ENCODE measurements at regions of chr18 and their contacts with region 1.

Region 1: GRCh38 chr18:80108728-80109675 is at the start of gene ADNP2:
- DNase-seq: peak; percentile 81 to 96
- H3K4me3 ChIP-seq: peak within 1 kb of the TSS; percentile 76 to 85
- H3K27ac ChIP-seq: peak within 1 kb of the TSS; percentile 99
- H3K4me1 ChIP-seq: peaks cover 0 to 11% of the 10 kb centered on the region in 2 donors
- H3K27me3 ChIP-seq: no peaks in the 10 kb centered on the region
- CTCF ChIP-seq: no peak
- total RNA-seq, gene ADNP2: 6.8 TPM

Region 2: DNA sequence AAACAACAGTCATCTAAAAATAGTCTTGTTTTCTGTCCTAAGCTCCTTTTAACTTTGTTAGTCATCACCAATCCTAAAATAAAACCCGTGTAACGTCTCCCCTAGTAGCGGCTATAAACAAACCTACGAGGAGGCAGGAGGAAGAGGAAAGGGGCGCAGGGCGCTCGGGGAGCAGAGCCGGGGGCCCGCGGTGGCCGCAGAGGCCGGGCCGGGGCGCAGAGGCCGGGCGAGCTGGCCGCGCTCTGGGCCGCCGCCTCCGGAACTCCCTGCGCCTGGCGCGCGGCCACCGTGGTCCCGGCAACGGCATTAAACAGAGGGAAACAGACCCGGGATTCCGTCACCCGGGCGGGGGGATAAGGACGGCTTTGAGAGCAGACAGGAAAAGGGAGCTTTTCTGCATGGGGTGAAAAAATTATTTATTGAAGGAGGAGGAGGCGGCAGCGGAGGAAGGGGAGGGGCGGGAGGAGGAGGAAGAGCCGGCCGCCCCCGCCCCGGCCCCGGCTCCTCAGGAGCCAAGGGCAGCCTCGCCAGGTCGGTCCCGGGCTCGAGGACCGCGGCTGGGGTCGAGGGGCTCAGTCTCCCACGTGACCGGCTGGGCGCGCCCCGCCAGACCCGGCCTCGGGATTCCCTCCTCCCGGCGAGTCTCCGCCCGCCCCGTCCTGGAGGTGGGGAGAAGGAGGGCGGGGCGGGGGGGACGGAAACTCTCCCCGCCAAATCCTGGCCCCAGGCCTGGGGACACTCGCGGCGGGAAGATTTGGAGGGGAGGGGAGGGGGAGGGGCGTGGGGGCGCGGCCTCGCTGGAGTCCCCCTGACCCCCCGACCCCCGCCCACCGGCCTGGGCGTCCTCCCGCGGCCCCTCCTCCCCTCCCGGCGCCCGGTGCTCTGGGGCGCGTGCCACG is 715.1 kb before region 1 on chr18:
- intact Hi-C with region 1: loop called (anchors 10 kb)
- DNase-seq: peak; percentile 63 to 94
- H3K4me3 ChIP-seq: peak overlapping the region; percentile 77 to 92
- H3K27ac ChIP-seq: peak overlapping the region; percentile 98 to 99
- H3K4me1 ChIP-seq: peaks cover 5 to 17% of the 10 kb centered on the region in 2 donors
- H3K27me3 ChIP-seq: no peaks in the 10 kb centered on the region
- CTCF ChIP-seq: no peak

Region 3: DNA sequence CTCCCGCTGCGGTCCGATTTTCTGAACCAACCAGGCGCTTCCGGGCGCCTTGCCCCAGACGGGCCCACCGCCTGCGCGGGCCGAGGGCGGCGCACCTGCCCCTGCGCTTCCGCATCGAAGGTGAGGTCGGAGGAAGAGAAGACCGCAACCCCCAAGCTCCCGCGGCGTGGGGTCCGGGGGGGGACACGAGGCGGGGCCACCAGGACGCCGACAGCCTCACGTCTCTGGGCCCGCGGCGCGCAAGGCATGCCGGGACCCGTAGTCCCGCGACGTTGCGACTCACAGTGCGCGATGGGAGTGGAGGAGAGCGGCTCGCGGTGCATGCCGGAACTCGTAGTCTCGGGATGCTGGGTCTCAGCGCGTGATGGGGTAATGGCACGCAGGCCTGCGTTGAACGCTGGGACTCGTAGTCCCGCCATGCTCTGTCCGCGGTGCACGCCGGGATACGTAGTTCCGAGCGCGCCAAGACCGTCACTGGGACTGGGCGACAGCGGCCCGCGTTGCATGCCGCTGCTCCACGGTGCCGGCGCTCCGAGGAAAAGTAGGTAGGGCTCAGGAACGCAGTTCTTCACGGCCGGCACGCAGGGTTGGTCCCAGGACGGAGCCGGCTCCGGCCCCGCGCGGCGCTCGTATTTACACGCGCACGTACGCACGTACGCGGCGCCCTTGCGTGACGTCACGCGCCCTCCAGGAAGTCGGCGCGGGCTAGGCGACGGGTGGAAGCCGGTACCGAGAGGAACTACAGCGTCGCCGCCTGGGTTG is 429.7 kb before region 1 on chr18 and contains the start of gene CTDP1:
- intact Hi-C with region 1: loop called (anchors 1 kb)
- DNase-seq: peak; percentile 96 to 99
- H3K4me3 ChIP-seq: peak within 1 kb of the TSS; percentile 92 to 99
- H3K27ac ChIP-seq: peak within 1 kb of the TSS; percentile 98 to 100
- H3K4me1 ChIP-seq: peaks cover 2 to 18% of the 10 kb centered on the region in 2 donors
- H3K27me3 ChIP-seq: no peaks in the 10 kb centered on the region
- CTCF ChIP-seq: no peak
- total RNA-seq, gene CTDP1: 31.7 TPM

Region 4: GRCh38 chr18:79951578-79952455 is 157.2 kb before region 1 on chr18 and contains the start of gene SLC66A2:
- intact Hi-C with region 1: loop called (anchors 2 kb)
- DNase-seq: peak; percentile 68 to 95
- H3K4me3 ChIP-seq: peak within 1 kb of the TSS; percentile 98 to 100
- H3K27ac ChIP-seq: peak within 1 kb of the TSS; percentile 68 to 75
- H3K4me1 ChIP-seq: peaks cover 11 to 20% of the 10 kb centered on the region in 2 donors
- H3K27me3 ChIP-seq: no peaks in the 10 kb centered on the region
- CTCF ChIP-seq: peak in 1 of 3 experiments; percentile 4
- total RNA-seq, gene SLC66A2: 52.9 TPM

Region 5: GRCh38 chr18:80147418-80148325 is 38.7 kb after region 1 on chr18:
- intact Hi-C with region 1: loop called (anchors 2 kb)
- DNase-seq: peak; percentile 61 to 90
- H3K4me3 ChIP-seq: peak overlapping the region; percentile 61 to 68
- H3K27ac ChIP-seq: no peak overlapping the region
- H3K4me1 ChIP-seq: no peaks in the 10 kb centered on the region
- H3K27me3 ChIP-seq: no peaks in the 10 kb centered on the region
- CTCF ChIP-seq: no peak

Measured in ascending aorta (tissue), 2 donors.